AG04450 (cell line): ENCODE measurements at regions of chr6 and their contacts with region 1.

Region 1: DNA sequence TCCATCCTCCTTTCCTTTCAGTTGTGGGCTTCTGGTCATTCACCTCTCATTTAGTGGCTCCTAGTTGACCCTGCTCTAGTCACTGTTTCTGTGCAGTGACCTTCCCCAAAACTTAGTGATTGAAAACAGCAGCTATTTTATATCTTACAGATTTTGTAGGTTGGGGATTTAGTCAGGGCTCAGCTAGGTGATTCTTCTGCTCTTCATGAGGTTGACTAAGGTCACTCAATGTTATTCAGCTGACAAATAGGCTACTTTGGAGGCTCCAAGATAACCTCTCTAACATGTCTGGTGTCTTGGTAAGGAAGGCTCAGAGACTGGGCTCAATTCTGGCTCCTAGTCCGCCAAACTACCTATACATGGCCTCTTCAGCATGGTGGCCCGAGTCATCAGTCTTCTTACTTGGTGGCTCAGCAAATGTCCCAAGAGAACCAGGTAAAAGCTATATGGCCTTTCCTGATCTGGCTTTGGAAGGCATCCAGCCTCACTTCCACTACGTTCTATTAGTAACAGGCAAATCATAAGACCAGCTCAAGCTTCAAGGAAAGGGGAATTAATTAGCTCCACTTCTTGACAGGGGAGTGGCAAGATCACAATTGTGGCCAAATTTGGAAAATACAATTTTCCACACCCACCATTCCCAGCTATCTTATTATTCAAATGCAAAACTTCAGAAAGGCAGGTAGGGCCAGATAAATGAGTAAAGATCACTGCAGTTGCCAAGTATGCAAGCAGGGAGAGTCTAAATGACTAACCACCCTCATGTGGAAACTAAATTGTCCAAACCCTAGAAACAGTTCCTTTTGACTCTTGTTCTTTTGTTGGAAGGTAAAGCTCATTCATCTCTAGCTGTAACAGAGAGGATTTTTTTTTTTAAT is 50.5 kb upstream of the LTV1 start:
- DNase-seq: no peak
- H3K4me3 ChIP-seq: no peak overlapping the region
- H3K27ac ChIP-seq: no peak overlapping the region
- H3K27me3 ChIP-seq: no peaks in the 10 kb centered on the region
- CTCF ChIP-seq: no peak

Region 2: DNA sequence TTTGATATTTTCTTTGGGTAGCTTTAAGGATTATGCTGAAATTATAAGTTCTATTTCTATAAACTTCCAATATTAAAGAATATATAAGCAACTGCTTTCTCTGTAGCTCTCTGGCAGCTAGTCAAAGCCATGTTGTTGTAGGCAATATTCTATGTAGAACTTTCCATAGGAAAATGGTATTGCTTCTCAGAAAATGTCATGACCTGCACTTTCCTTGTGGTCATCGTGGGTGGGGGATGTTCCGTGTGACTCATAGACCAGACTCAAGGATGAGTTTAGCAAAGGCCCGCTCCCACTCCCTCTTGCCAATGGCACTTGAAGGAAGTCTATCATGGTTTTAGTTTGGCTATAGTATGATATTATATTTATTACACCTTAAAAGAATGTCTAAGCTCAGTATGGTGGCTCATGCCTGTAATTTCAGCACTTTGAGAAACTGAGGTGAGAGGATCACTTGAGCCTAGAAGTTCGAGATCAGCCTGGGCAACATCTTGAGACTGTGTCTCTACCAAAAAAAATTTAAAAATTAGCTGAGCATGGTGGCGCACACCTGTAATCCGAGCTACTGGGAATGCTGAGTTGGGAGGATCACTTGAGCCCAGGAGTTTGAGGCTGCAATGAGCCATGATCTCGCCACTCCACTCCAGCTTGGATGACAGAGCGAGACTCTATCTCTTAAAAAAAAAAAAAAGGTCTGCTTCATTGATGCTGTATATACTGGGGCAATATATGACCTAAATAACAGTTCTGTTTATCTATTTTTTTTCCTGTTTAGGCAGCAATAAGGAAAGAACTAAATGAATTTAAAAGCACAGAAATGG is 13.9 kb after region 1 on chr6:
- CTCF ChIA-PET with region 1: no interaction called
- POLR2A ChIA-PET with region 1: no interaction called
- DNase-seq: peak; percentile 23
- H3K4me3 ChIP-seq: no peak overlapping the region
- H3K27ac ChIP-seq: no peak overlapping the region
- H3K27me3 ChIP-seq: no peaks in the 10 kb centered on the region
- CTCF ChIP-seq: no peak

Region 3: DNA sequence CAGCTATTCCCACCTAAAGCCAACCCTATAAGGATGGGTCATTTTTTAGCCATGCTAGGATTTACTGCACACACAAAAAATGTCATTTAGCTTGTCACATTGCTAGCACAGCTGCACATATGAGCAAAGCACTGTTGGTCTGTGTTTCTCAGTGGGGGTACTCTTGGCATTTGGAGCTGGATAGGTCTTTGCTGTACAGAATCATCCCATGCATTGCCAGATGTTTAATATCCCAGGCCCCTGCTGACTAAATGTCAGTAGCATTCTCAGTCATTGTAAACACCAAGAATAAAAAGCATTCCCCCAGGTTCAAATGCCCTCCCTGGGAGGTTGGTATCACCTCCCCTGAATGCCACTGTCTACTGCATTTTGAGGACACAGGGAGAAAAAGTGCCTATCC is 35.9 kb after region 1 on chr6:
- CTCF ChIA-PET with region 1: no interaction called
- POLR2A ChIA-PET with region 1: interaction called, 11 read pairs
- DNase-seq: no peak
- H3K4me3 ChIP-seq: no peak overlapping the region
- H3K27ac ChIP-seq: no peak overlapping the region
- H3K27me3 ChIP-seq: no peaks in the 10 kb centered on the region
- CTCF ChIP-seq: no peak